ENCODE measurements at regions of chr9 and their contacts with region 1.

Region 1: GRCh38 chr9:134326724-134327601 is 708 bp downstream of the RXRA start:
- DNase-seq: peak; percentile 60
- H3K27ac ChIP-seq: peak overlapping the region; percentile 99
- CTCF ChIP-seq: no peak

Region 2: GRCh38 chr9:134195558-134195957 is 131.4 kb before region 1 on chr9:
- CTCF ChIA-PET with region 1: no interaction called
- POLR2A ChIA-PET with region 1: no interaction called
- DNase-seq: no peak
- H3K27ac ChIP-seq: no peak overlapping the region
- CTCF ChIP-seq: no peak

Region 3: DNA sequence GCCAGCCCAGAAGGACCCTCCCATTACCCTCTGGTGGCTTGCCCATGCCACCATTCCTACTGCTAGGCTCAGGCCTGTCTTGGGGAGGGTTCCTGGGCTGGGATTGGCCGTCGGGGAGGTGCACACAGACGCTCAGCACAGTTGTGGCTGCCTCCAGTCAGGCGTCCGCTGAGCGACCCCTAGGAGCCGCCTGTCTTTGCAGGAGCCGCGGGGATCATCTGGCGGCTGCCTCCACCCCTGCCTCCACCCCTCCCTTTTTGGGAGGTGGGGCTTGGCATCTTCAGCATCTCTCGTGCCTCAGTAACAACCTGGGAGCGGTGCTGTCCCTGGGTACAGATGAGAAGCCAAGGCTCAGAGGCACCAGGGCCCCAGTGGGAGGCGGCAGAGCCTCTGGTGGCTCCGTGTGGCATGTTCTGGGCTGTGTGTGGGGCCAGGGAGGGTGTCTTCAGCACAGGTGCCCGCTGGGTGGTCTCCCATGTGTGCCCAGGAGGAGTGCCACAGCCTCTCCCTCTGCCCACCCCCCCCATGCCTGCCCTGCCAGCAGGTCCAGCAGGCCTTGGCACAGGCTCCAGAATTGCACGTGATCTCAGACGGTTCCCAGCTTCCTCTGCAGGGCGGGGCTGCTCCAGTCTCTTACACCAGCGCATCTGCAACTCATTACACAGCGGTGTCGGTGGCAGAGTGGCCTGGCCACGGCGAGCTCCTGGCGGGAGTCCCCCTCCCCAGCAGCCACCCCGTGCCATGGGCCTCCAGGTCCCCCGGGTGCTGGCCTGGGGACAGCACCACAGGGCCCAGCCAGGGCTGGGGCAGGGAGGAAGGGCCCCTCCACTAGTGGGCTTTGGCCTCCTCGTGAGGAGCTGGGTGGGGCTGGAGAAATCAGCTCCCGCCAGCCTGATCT is 39.1 kb after region 1 on chr9:
- CTCF ChIA-PET with region 1: interaction called, 4 read pairs
- POLR2A ChIA-PET with region 1: interaction called, 17 read pairs
- DNase-seq: peak; percentile 97
- H3K27ac ChIP-seq: peak overlapping the region; percentile 100
- CTCF ChIP-seq: peak; percentile 65